GM12878 (cell line): ENCODE measurements at regions of chr11 and their contacts with region 1.

Region 1: DNA sequence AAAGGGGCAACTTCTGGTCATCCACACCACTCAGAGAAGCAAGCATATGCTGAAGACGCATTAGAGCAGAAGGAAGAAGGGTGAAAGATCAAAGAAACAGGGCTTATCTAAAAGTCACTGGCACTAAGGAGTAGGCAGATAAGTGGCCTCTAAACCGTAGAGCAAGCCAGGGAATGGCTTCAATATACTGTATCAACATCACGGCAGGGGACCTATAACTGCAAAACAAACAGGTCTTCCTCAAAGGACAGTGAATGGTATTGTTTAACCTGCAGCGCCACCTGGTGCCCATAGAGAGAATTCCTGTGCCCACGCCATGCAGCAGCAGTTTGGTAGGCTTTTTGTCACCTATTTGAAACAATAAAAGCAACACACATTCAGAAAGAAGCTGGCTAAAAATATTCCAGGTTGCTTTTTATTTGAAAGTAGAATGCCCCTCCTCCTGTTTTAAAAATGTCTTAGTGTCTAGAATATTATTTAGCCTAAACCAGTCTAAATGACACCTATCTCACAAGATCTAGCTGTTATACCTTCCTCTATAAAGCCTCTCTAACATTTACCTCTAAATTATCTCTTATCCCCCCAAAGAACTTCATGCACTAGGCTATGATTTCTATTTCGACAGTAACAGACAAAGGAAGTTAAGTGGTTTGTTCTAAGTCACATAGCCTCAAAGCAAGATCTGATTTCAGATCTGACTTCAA is 21.8 kb downstream of the SNX19 start:
- DNase-seq: peak; percentile 15
- ATAC-seq: peak; percentile 99
- H3K4me3 ChIP-seq: no peak overlapping the region
- H3K27ac ChIP-seq: no peak overlapping the region
- H3K4me1 ChIP-seq: no peaks in the 10 kb centered on the region
- H3K27me3 ChIP-seq: no peaks in the 10 kb centered on the region
- CTCF ChIP-seq: peak; percentile 81 to 87 (median 85)
- EP300 ChIP-seq: no peak
- POLR2A ChIP-seq: no peak
- RAD21 ChIP-seq: peak; percentile 72

Region 2: GRCh38 chr11:130882138-130882551 is 12.3 kb before region 1 on chr11:
- CTCF ChIA-PET with region 1: interaction called, 18 read pairs
- POLR2A ChIA-PET with region 1: no interaction called
- RAD21 ChIA-PET with region 1: interaction called, 4 read pairs
- SMC1A ChIA-PET with region 1: interaction called, 4 read pairs
- in situ Hi-C with region 1: no loop called
- intact Hi-C with region 1: no loop called
- DNase-seq: no peak
- ATAC-seq: peak; percentile 28; the same call in 1 of the 3 replicates
- H3K4me3 ChIP-seq: no peak overlapping the region
- H3K27ac ChIP-seq: peak overlapping the region; percentile 8; the same call in 1 of the 2 replicates
- H3K4me1 ChIP-seq: no peaks in the 10 kb centered on the region
- H3K27me3 ChIP-seq: no peaks in the 10 kb centered on the region
- CTCF ChIP-seq: no peak
- EP300 ChIP-seq: no peak
- POLR2A ChIP-seq: no peak
- RAD21 ChIP-seq: no peak

Region 3: DNA sequence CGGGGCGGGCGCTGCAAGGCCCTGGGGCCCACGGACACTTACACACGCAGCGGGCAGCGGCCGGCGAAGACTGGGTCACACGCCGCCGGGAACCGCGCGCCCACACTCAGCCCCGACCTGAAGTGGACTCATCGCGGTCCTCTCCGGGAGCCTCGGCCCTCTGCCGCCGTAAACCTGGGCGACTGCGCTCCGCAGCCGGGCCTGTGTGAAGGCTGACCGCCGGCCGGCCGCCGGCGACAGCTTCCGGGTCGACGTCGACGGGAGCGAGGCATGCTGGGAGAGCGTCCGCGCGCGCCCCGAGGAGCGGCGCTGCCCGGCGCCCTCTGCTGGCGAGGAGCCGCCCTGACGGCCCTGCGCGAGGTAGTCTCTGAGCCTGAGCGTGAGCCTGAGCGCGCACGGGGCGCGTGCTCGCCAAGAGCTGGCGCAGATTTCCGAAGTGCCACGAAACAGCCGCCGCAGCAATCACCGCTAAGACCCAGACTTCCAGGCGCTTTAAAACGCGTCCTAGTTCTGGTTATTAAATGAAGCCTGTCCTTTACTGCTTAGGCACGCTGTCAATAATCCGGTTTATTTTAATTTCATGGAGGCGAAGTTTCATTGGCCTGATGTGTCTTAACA is 21.9 kb after region 1 on chr11 and contains the start of gene SNX19:
- CTCF ChIA-PET with region 1: interaction called, 16 read pairs
- POLR2A ChIA-PET with region 1: no interaction called
- RAD21 ChIA-PET with region 1: no interaction called
- SMC1A ChIA-PET with region 1: interaction called, 3 read pairs
- in situ Hi-C with region 1: no loop called
- intact Hi-C with region 1: no loop called
- DNase-seq: peak; percentile 57
- ATAC-seq: peak; percentile 98
- H3K4me3 ChIP-seq: peak within 1 kb of the TSS; percentile 94
- H3K27ac ChIP-seq: peak within 1 kb of the TSS; percentile 82
- H3K4me1 ChIP-seq: peaks cover 10% of the 10 kb centered on the region
- H3K27me3 ChIP-seq: no peaks in the 10 kb centered on the region
- CTCF ChIP-seq: peak; percentile 89 to 99 (median 97); a peak in 5 of 6 replicates
- EP300 ChIP-seq: no peak
- POLR2A ChIP-seq: peak; percentile 99
- RAD21 ChIP-seq: no peak
- polyA plus RNA-seq, gene SNX19: 3.0 to 4.5 TPM

Region 4: GRCh38 chr11:130964058-130964792 is 69.8 kb after region 1 on chr11:
- CTCF ChIA-PET with region 1: no interaction called
- POLR2A ChIA-PET with region 1: no interaction called
- RAD21 ChIA-PET with region 1: no interaction called
- SMC1A ChIA-PET with region 1: no interaction called
- in situ Hi-C with region 1: no loop called
- intact Hi-C with region 1: no loop called
- DNase-seq: no peak
- ATAC-seq: no peak
- H3K4me3 ChIP-seq: no peak overlapping the region
- H3K27ac ChIP-seq: no peak overlapping the region
- H3K4me1 ChIP-seq: no peaks in the 10 kb centered on the region
- H3K27me3 ChIP-seq: no peaks in the 10 kb centered on the region
- CTCF ChIP-seq: no peak
- EP300 ChIP-seq: no peak
- POLR2A ChIP-seq: no peak
- RAD21 ChIP-seq: no peak